SK-N-SH (cell line): ENCODE measurements at regions of chr14 and their contacts with region 1.

Region 1: GRCh38 chr14:77111043-77111442 is 13.0 kb downstream of the CIPC start:
- DNase-seq: no peak
- H3K4me3 ChIP-seq: no peak overlapping the region
- H3K27ac ChIP-seq: no peak overlapping the region
- H3K4me1 ChIP-seq: no peaks in the 10 kb centered on the region; a peak in 1 of 4 replicates
- H3K27me3 ChIP-seq: no peaks in the 10 kb centered on the region
- CTCF ChIP-seq: no peak
- EP300 ChIP-seq: no peak
- RAD21 ChIP-seq: no peak

Region 2: DNA sequence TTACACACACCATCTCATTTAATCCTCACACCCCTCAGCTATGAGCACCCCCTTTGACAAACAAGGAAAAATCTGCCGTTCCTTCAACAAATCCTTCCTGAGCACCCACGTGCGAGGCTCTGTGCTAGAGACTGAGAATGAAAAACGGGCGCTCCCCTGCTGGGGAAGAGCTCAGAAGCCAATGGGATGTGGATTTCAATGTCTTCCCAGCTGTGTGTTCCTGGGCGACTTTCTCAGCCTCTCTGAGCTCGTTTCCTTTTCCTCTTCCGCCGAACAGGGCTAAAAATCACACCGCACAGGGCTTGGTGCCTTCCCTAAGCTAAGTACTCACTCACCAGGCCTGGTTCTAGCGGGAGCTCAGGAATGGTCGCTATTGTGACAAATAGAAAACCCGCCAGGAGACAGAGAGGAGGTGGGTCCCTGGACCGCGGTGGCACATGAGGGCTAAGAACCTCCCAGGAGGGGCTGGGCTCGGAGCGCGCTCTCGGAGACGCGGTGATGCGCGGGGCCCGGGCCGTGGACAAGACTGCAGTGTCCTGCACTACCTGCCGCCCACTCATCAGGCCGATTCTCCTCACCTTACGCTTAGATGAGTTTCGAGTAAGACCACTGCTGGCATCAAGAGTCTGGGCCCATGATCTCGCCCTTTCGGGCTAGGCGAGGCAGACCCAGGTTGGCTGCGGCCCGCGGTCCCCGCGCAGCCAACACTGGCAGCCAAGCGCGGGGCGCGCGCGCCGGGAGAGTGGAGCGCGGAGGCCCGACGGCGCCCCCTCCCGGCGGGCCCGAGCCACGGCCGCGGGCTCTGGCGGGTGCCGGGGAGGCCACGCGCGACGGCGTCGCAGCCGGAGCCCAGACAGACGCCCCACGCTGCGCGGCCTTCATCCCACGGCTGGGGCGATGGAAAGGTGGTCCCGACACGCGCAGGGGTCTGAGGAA is 13.6 kb after region 1 on chr14:
- CTCF ChIA-PET with region 1: interaction called, 24 read pairs
- POLR2A ChIA-PET with region 1: interaction called, 4 read pairs
- DNase-seq: peak; percentile 92
- H3K4me3 ChIP-seq: peak overlapping the region; percentile 53 to 58; a peak in 3 of 4 replicates
- H3K27ac ChIP-seq: no peak overlapping the region
- H3K4me1 ChIP-seq: peaks cover 0 to 20% of the 10 kb centered on the region in 2 experiments; a peak in 1 of 4 replicates
- H3K27me3 ChIP-seq: no peaks in the 10 kb centered on the region
- CTCF ChIP-seq: peak; percentile 53
- EP300 ChIP-seq: no peak
- RAD21 ChIP-seq: peak; percentile 15; the same call in 1 of the 2 replicates

Region 3: GRCh38 chr14:77436042-77436441 is 325.0 kb after region 1 on chr14:
- CTCF ChIA-PET with region 1: no interaction called
- POLR2A ChIA-PET with region 1: no interaction called
- DNase-seq: no peak
- H3K4me3 ChIP-seq: no peak overlapping the region
- H3K27ac ChIP-seq: no peak overlapping the region
- H3K4me1 ChIP-seq: no peaks in the 10 kb centered on the region
- H3K27me3 ChIP-seq: no peaks in the 10 kb centered on the region
- CTCF ChIP-seq: no peak
- EP300 ChIP-seq: no peak
- RAD21 ChIP-seq: no peak